ENCODE measurements at regions of chr5 and their contacts with region 1.

Region 1: DNA sequence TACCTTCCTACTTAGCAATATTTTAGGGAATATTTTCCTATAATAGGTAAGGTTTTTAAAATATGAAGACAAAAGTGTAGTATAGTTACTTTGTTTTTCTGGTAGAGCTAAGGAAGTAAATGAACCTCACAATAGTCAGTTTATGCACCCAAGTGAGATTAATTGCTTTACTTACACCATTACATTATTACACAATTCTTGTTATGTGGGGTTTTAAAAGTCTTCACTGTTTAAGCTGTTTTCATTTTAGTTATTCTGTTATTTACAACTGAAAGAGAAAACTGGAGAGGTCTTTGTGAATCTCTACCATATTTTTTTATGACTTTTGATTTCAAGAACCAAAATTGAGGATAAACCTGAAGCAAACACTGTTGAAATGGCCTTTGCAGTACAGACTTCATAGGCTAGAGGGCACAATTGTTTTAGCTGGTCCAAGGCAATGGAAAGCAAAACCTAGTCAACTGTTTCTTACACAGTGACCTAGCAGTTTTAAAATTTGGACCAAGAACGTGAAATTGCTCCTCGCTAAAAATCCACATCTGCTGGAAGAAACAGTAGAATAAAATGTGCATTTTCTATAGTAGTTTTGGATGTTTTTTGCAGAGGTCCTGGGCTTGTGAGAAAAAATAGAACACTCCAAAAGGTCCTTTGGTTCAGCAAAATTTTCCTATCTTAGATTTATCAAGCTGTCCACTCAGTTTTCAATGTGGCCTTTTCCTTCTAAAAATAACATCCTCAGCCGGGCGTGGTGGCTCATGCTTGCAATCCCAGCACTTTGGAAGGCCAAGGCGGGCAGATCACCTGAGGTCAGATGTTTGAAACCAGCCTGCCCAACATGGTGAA is 66.4 kb upstream of the FER start:
- DNase-seq: peak; percentile 70
- ATAC-seq: peak; percentile 92
- H3K4me3 ChIP-seq: no peak overlapping the region
- H3K27ac ChIP-seq: no peak overlapping the region
- H3K4me1 ChIP-seq: 0 out of 2 replicates have a peak, but pooled peaks cover 3% of the 10 kb centered on the region
- H3K27me3 ChIP-seq: no peaks in the 10 kb centered on the region
- CTCF ChIP-seq: peak; percentile 88

Region 2: DNA sequence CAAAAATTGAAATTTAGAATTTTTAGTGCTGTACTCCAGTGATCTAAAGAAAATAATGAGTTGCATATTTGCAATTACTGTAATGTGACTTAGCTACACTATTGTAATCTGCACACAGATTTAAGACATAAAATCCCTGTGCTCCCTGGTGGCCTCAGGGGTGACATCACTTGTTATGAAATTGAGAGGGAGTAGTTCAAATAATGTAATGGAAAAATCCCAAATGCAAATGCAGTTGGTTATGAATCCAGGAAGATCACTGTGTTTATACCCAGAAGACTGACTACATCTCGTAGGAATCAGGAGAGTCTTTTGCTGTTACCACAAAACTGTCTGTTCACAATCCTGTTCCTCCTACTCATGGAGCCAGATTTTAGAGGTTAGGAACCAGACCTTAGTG is 120.7 kb before region 1 on chr5:
- CTCF ChIA-PET with region 1: no interaction called
- POLR2A ChIA-PET with region 1: no interaction called
- intact Hi-C with region 1: no loop called
- DNase-seq: peak; percentile 15
- ATAC-seq: peak; percentile 22
- H3K4me3 ChIP-seq: no peak overlapping the region
- H3K27ac ChIP-seq: no peak overlapping the region
- H3K4me1 ChIP-seq: no peaks in the 10 kb centered on the region
- H3K27me3 ChIP-seq: no peaks in the 10 kb centered on the region; the same call in 1 of the 2 replicates
- CTCF ChIP-seq: no peak

Region 3: GRCh38 chr5:108642167-108642906 is 39.0 kb before region 1 on chr5:
- CTCF ChIA-PET with region 1: no interaction called
- POLR2A ChIA-PET with region 1: no interaction called
- intact Hi-C with region 1: loop called (anchors 5 kb)
- DNase-seq: peak; percentile 82
- ATAC-seq: peak; percentile 97
- H3K4me3 ChIP-seq: no peak overlapping the region; the same call in 1 of the 2 replicates
- H3K27ac ChIP-seq: no peak overlapping the region
- H3K4me1 ChIP-seq: 0 out of 2 replicates have a peak, but pooled peaks cover under 1% of the 10 kb centered on the region
- H3K27me3 ChIP-seq: no peaks in the 10 kb centered on the region
- CTCF ChIP-seq: peak; percentile 88

Region 4: GRCh38 chr5:108727651-108728565 is 46.6 kb after region 1 on chr5:
- CTCF ChIA-PET with region 1: no interaction called
- POLR2A ChIA-PET with region 1: interaction called, 12 read pairs
- intact Hi-C with region 1: no loop called
- DNase-seq: peak; percentile 90
- ATAC-seq: peak; percentile 100
- H3K4me3 ChIP-seq: peak overlapping the region; percentile 79
- H3K27ac ChIP-seq: peak overlapping the region; percentile 49
- H3K4me1 ChIP-seq: peaks cover 26% of the 10 kb centered on the region
- H3K27me3 ChIP-seq: no peaks in the 10 kb centered on the region
- CTCF ChIP-seq: no peak

Region 5: GRCh38 chr5:108801776-108802175 is 120.5 kb after region 1 on chr5:
- CTCF ChIA-PET with region 1: no interaction called
- POLR2A ChIA-PET with region 1: no interaction called
- intact Hi-C with region 1: no loop called
- DNase-seq: peak; percentile 92
- ATAC-seq: peak; percentile 97
- H3K4me3 ChIP-seq: peak overlapping the region; percentile 29; the same call in 1 of the 2 replicates
- H3K27ac ChIP-seq: peak overlapping the region; percentile 71
- H3K4me1 ChIP-seq: peaks cover 43% of the 10 kb centered on the region
- H3K27me3 ChIP-seq: no peaks in the 10 kb centered on the region
- CTCF ChIP-seq: no peak

Region 6: GRCh38 chr5:108900668-108901067 is 219.4 kb after region 1 on chr5:
- CTCF ChIA-PET with region 1: no interaction called
- POLR2A ChIA-PET with region 1: no interaction called
- intact Hi-C with region 1: loop called (anchors 5 kb)
- DNase-seq: peak; percentile 70
- ATAC-seq: peak; percentile 96
- H3K4me3 ChIP-seq: no peak overlapping the region
- H3K27ac ChIP-seq: peak overlapping the region; percentile 27
- H3K4me1 ChIP-seq: peaks cover 16% of the 10 kb centered on the region
- H3K27me3 ChIP-seq: no peaks in the 10 kb centered on the region
- CTCF ChIP-seq: no peak

Region 7: DNA sequence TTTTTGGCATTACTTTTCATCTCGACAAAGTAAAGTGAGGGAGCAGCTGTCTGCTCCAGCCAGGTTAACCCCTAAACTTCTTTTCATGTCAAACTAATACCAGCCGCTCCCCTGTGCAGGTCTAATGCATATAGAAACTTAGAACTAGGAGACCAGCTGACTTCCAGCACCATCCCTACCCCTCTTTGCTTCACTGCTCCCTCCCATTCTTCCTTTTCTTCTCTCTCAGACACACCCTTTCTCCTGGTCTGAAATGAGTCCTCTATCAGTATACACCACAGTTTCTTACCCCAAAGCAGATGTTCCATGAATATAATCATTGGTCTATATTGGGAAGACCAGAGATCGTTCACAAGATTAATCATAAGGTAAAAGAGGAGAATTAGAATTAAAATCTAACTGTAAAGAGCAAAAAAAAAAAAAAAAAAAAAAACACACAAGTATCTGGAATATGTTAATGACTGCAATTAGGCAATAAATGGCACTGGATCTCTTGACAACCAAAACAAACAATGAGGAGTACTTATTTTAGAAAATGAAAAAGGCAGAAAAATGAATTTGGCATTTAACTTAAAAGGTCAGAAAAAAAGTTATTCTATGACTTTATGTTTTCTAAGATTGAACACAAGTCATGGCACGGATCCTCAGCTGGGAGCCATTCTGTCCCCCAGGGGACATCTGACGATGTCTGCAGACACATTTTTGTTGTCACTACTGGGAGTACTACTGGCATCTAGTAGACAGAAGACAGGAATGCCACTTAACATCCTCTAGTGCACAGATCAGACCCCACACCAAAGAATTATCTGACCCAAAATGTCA is 518.7 kb after region 1 on chr5:
- CTCF ChIA-PET with region 1: no interaction called
- POLR2A ChIA-PET with region 1: no interaction called
- intact Hi-C with region 1: loop called (anchors 10 kb)
- DNase-seq: no peak
- ATAC-seq: no peak
- H3K4me3 ChIP-seq: no peak overlapping the region
- H3K27ac ChIP-seq: no peak overlapping the region
- H3K4me1 ChIP-seq: peaks cover 15% of the 10 kb centered on the region
- H3K27me3 ChIP-seq: no peaks in the 10 kb centered on the region
- CTCF ChIP-seq: no peak

Region 8: DNA sequence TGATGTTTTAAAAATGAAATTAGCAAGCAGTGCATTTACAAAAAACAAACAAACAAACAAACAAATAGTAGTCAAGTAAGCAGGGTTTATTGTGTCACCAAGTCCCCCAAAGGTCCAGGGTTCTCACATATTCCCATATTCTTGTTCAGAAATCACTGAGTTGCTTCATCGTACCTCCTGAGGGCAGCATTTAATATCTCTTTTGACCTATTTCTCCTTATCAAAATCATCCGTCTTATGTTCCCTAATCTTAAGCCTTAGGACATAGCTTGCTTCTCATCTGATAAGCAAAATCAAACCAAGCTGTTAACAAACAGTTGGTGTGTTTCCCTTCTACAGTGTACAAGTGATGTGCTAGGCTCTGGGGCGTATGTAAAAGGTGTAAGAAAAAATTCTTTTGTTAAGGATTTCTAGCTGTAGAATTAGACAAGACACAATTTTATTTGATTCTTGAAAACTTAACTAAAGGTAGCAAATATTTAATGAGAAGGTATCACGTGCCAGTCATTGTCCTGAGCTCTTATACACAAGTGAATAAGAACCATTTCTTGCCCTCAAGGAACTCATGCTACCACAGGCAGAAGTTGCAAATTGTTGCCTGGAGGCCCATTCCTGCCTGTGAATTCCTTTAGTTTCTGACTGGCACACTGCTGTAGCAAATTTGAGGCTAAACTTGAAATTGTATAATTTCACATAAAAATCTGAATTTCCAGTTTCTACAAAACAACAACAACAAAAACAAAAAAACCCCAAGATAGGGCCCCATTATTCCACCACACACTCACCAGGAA is 899.1 kb after region 1 on chr5:
- CTCF ChIA-PET with region 1: no interaction called
- POLR2A ChIA-PET with region 1: no interaction called
- intact Hi-C with region 1: no loop called
- DNase-seq: no peak
- ATAC-seq: no peak
- H3K4me3 ChIP-seq: no peak overlapping the region
- H3K27ac ChIP-seq: no peak overlapping the region
- H3K4me1 ChIP-seq: no peaks in the 10 kb centered on the region
- H3K27me3 ChIP-seq: no peaks in the 10 kb centered on the region
- CTCF ChIP-seq: peak; percentile 31; the same call in 1 of the 2 replicates